PC-3 (cell line): ENCODE measurements at regions of chr12 and their contacts with region 1.

Region 1: DNA sequence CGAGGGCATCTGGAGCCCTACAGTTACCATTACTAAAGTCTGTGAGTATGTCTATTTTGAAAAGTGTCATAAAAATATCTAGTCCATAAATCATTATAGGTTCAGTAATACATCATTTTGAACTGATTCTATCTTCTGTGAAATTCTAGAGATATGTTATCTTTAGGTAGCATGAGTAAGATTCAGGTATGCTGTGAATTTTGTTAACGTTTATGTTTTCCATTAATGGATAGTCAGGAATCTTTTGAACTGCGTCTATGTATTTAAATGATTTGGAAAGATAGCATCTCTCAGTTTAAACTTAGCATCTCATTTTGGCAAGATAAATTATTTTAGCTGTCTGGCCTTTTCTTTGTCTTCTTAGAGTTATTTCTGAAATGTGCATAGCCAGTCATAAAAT is 8.3 kb downstream of the ALG10B start:
- DNase-seq: no peak
- ATAC-seq: no peak
- H3K4me3 ChIP-seq: no peak overlapping the region
- H3K27ac ChIP-seq: no peak overlapping the region
- H3K4me1 ChIP-seq: 0 out of 2 replicates have a peak, but pooled peaks cover 3% of the 10 kb centered on the region
- H3K27me3 ChIP-seq: no peaks in the 10 kb centered on the region
- CTCF ChIP-seq: no peak

Region 2: GRCh38 chr12:38664661-38665269 is 339.9 kb after region 1 on chr12:
- CTCF ChIA-PET with region 1: no interaction called
- POLR2A ChIA-PET with region 1: no interaction called
- intact Hi-C with region 1: loop called (anchors 5 kb)
- DNase-seq: peak; percentile 65
- ATAC-seq: peak; percentile 87
- H3K4me3 ChIP-seq: no peak overlapping the region
- H3K27ac ChIP-seq: no peak overlapping the region
- H3K4me1 ChIP-seq: no peaks in the 10 kb centered on the region
- H3K27me3 ChIP-seq: no peaks in the 10 kb centered on the region
- CTCF ChIP-seq: peak; percentile 87

Region 3: DNA sequence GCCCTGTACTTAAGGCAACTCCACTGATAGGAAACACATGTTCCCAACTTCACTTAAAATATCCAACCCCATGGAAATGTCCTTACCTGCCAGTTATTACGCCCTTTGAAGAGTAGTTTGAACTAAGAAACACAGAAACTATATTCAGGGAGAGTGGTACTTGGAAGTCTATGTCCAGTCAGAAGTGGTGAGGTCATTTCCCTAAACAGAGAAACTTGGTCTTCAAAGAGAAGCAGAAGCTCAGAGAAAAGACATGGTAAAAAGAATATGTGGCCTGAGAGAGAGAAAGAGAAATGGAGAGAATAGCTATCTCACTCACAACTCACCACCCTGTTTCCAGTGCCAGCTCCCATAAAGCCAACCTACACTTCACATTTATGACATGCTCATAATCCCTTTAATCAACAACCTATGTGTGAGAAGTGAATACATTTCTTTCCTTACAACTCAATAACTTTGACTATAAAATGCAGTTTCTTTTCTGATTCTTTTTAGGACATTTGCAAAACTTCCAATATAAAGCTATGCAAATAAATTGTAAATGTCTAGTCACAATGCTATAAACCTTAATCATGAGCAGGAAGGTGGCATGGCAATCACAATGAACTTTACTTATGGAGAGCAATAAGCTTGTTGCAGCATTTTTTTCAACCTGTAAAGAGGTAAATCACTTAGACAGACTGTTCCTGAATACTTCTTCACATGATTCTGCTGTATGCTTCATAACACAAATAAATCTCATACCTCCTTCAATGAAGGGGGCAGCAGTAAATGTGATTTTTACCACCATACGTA is 513.4 kb after region 1 on chr12:
- CTCF ChIA-PET with region 1: no interaction called
- POLR2A ChIA-PET with region 1: no interaction called
- intact Hi-C with region 1: loop called (anchors 5 kb)
- DNase-seq: no peak
- ATAC-seq: peak; percentile 91
- H3K4me3 ChIP-seq: no peak overlapping the region
- H3K27ac ChIP-seq: no peak overlapping the region
- H3K4me1 ChIP-seq: no peaks in the 10 kb centered on the region
- H3K27me3 ChIP-seq: no peaks in the 10 kb centered on the region
- CTCF ChIP-seq: no peak

Region 4: DNA sequence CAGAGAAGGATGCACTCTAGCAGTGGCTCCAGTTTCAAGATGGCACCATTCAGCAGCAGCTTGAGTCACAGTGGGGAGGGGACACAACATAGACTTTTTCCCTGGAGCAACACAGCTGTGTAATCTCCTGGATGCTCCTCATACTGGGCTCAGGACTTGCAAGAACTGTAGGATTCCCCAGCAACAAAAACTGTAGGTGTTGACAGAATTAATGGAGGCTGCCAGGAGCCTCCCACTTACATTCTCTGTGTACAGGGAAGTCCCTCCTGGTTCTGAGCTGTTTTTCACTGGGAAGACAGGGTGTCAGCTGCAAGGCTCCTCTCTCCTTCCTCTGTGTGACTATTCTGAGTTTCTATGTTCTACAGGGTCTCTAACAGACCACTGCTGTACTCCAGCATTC is 900.1 kb after region 1 on chr12:
- CTCF ChIA-PET with region 1: no interaction called
- POLR2A ChIA-PET with region 1: no interaction called
- intact Hi-C with region 1: no loop called
- DNase-seq: no peak
- ATAC-seq: no peak
- H3K4me3 ChIP-seq: no peak overlapping the region
- H3K27ac ChIP-seq: no peak overlapping the region
- H3K4me1 ChIP-seq: peaks cover 10% of the 10 kb centered on the region
- H3K27me3 ChIP-seq: no peaks in the 10 kb centered on the region
- CTCF ChIP-seq: no peak